ENCODE measurements at regions of chr20 and their contacts with region 1.

Region 1: DNA sequence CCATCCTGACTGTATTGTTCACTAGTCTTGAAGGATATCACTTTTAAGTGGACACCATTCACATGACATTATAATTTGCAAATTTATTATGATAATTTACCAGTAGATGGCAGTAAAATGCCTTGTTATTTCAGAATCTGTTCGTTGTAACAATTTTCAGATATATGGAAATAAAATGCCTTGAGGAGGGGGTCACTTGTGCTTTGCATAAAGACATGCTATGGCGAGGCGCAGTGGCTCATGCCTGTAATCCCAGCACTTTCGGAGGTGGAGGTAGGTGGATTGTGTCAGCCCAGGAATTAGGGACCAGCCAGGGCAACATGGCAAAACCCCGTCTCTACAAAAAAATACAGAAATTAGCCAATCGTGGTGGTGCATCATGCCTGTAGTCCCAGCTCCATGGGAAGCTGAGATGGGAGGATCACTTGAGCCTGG is 9.0 kb upstream of the NCOA6 start:
- DNase-seq: peak; percentile 46
- H3K4me3 Mint-ChIP-seq: no peak overlapping the region
- H3K27ac Mint-ChIP-seq: no peak overlapping the region
- H3K4me1 Mint-ChIP-seq: no peaks in the 10 kb centered on the region
- H3K27me3 Mint-ChIP-seq: peaks cover 56% of the 10 kb centered on the region
- CTCF ChIP-seq: peak; percentile 42

Region 2: GRCh38 chr20:34435589-34435988 is 398.9 kb before region 1 on chr20:
- CTCF ChIA-PET with region 1: no interaction called
- POLR2A ChIA-PET with region 1: no interaction called
- intact Hi-C with region 1: no loop called
- DNase-seq: no peak
- H3K4me3 Mint-ChIP-seq: no peak overlapping the region
- H3K27ac Mint-ChIP-seq: peak overlapping the region; percentile 68
- H3K4me1 Mint-ChIP-seq: peaks cover 5% of the 10 kb centered on the region
- H3K27me3 Mint-ChIP-seq: no peaks in the 10 kb centered on the region
- CTCF ChIP-seq: no peak

Region 3: DNA sequence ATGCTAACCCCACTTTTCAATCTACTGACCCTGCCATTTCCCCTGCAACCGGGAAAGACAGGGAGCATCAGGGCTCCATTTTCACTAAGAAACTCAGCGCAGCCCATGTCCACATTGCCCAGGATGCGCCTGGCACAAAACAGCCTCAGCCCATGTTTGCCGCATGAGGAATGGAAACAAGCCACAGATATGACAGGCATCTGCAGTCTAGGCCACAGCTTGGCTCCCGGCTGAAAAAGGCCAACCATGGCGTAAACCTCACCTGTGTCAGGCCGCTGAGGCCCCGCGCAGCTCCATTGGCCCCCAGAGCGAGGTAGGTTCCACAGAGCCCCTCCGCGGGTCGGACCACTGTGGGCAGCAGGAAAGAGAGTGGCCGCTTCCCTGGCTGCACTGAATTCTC is 16.5 kb after region 1 on chr20:
- CTCF ChIA-PET with region 1: interaction called, 10 read pairs
- POLR2A ChIA-PET with region 1: no interaction called
- intact Hi-C with region 1: no loop called
- DNase-seq: no peak
- H3K4me3 Mint-ChIP-seq: no peak overlapping the region
- H3K27ac Mint-ChIP-seq: no peak overlapping the region
- H3K4me1 Mint-ChIP-seq: no peaks in the 10 kb centered on the region
- H3K27me3 Mint-ChIP-seq: peaks cover 18% of the 10 kb centered on the region
- CTCF ChIP-seq: no peak

Region 4: GRCh38 chr20:34955232-34956040 is 121.0 kb after region 1 on chr20 and contains the starts of genes GSS and MYH7B:
- CTCF ChIA-PET with region 1: interaction called, 8 read pairs
- POLR2A ChIA-PET with region 1: interaction called, 4 read pairs
- intact Hi-C with region 1: loop called (anchors 5 kb)
- DNase-seq: peak; percentile 98
- H3K4me3 Mint-ChIP-seq: peak within 1 kb of the TSS; percentile 95
- H3K27ac Mint-ChIP-seq: peak within 1 kb of the TSS; percentile 97
- H3K4me1 Mint-ChIP-seq: peaks cover 21% of the 10 kb centered on the region
- H3K27me3 Mint-ChIP-seq: no peaks in the 10 kb centered on the region
- CTCF ChIP-seq: peak; percentile 64
- total RNA-seq, gene GSS: 94.6 and 115 TPM in 2 replicates
- total RNA-seq, gene MYH7B: 0.07 and 0.27 TPM in 2 replicates

Measured in MCF 10A (cell line).